ENCODE measurements at regions of chr5 and their contacts with region 1.

Region 1: GRCh38 chr5:159198063-159199036 is 11.0 kb downstream of the RNF145 start:
- DNase-seq: peak; percentile 72
- CTCF ChIP-seq: no peak

Region 2: GRCh38 chr5:159112436-159112835 is 85.9 kb before region 1 on chr5:
- CTCF ChIA-PET with region 1: no interaction called
- POLR2A ChIA-PET with region 1: no interaction called
- DNase-seq: no peak
- CTCF ChIP-seq: no peak

Region 3: DNA sequence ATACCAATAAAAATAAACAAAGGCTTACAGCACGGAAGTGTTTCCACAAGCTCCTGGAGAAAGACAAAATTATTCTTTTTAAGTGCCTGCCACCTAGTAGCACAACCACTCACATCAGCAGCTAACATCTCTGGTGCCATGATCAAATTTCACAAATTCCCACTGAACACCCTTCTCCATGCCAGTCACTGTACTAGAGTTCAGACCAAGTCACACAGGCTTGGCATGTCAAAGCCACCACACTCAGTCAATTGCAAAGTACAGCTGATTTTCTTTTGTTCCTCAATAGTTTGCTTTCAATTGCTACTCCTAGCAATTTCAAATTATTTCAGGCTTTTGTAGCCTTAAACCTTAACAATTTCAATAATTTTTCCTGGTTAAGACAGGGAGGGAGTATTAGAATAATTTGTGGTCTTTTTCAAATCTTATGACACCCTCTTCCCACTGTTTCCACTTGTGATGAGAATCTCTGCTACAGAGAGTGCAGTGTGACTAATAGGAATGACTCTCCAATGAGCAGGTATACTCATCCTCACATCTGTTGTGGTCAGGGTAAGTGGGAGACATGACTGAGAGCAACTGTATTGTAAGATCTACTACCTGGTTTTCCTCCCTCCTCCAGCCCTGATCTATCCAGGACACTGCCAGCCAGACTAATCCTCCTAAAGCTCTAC is 35.2 kb before region 1 on chr5:
- CTCF ChIA-PET with region 1: no interaction called
- POLR2A ChIA-PET with region 1: no interaction called
- DNase-seq: no peak
- CTCF ChIP-seq: no peak

Region 4: GRCh38 chr5:159184858-159185381 is 13.4 kb before region 1 on chr5:
- CTCF ChIA-PET with region 1: interaction called, 11 read pairs
- POLR2A ChIA-PET with region 1: no interaction called
- DNase-seq: peak; percentile 24
- CTCF ChIP-seq: no peak

Region 5: GRCh38 chr5:159209438-159210305 is 11.3 kb after region 1 on chr5 and contains the start of gene RNF145:
- CTCF ChIA-PET with region 1: interaction called, 14 read pairs
- POLR2A ChIA-PET with region 1: no interaction called
- DNase-seq: peak; percentile 92
- CTCF ChIP-seq: no peak